Activated CD4-positive, alpha-beta T cell treated with anti-CD3 and anti-CD28 coated beads for 36 hours (primary cell): ENCODE measurements at regions of chr7 and their contacts with region 1.

Region 1: DNA sequence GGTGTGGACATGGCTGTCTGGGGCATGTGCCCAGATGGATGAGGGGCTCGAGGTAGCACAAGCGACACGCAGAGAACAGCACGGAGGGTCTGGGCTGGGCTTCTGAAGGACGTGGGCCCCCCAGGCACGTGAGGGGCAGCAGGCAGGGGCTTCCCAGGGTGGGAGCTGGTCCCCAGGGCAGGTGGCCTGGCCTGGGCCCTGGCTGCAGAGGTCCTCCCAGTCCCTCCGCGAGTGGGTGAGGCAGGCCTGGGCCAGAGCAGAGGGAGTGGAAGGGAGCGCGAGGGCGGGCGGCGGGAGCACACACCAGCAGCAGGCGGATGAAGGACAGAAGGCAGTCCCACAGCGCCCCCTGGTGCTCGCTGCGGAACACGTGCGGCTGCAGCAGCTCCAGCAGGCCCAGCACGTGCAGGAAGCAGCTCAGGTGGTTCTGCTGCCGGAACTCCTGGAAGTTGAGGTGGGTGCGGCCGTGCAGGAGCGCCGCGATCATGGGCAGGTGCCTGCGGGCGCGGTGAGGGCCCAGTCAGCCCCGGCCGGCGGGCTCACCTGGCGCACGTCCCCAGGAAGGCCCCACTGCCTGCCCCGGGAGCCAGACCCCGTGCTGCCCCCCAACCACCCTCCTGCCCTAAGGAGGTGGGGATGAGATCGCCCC is 14.7 kb upstream of the MICALL2 start:
- DNase-seq: peak; percentile 94
- ATAC-seq: peak; percentile 93
- H3K4me3 Mint-ChIP-seq: no peak overlapping the region
- H3K27ac Mint-ChIP-seq: no peak overlapping the region
- H3K4me1 Mint-ChIP-seq: peaks cover 5% of the 10 kb centered on the region
- H3K27me3 Mint-ChIP-seq: no peaks in the 10 kb centered on the region

Region 2: GRCh38 chr7:1004018-1004852 is 469.8 kb before region 1 on chr7:
- CTCF ChIA-PET with region 1: no interaction called
- POLR2A ChIA-PET with region 1: no interaction called
- intact Hi-C with region 1: no loop called
- DNase-seq: no peak
- ATAC-seq: no peak
- H3K4me3 Mint-ChIP-seq: no peak overlapping the region
- H3K27ac Mint-ChIP-seq: no peak overlapping the region
- H3K4me1 Mint-ChIP-seq: no peaks in the 10 kb centered on the region
- H3K27me3 Mint-ChIP-seq: no peaks in the 10 kb centered on the region

Region 3: GRCh38 chr7:1240517-1241257 is 233.3 kb before region 1 on chr7:
- CTCF ChIA-PET with region 1: no interaction called
- POLR2A ChIA-PET with region 1: no interaction called
- intact Hi-C with region 1: loop called in 1 of 2 experiments (anchors 5 kb)
- DNase-seq: no peak
- ATAC-seq: no peak
- H3K4me3 Mint-ChIP-seq: no peak overlapping the region
- H3K27ac Mint-ChIP-seq: no peak overlapping the region
- H3K4me1 Mint-ChIP-seq: peaks cover 5% of the 10 kb centered on the region
- H3K27me3 Mint-ChIP-seq: peaks cover 55% of the 10 kb centered on the region

Region 4: DNA sequence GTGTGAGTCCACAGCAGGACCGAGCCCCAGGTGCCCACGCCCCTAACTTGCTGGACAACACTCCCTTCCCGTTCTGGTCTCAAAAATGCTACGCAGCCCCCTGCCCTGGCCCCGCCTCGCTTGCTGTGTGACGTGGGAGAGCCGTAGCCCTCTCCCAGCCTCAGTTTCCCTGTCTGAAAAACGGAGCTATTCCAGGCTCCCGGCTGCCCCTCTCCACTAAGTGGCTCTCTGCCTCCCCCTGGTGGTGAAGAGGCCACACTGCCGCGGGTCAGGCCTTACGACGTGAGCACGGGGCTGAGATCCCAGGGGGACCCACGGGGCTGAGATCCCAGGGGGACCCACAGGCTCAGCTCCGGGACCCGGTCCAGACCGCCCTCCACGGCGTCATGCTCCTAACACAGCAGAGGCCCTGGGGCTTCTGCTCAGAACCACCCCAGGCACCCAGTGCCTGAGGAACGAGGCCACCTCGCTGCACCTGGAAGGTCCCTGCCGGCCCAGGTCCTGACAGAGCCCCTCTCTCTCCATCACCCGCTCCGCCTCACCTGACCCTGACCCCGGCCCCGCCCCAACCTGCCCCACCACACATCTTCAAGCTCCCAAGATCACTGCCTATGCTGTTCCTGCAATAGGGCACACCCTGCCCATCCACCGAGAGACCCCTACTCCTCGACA is 41.4 kb before region 1 on chr7:
- CTCF ChIA-PET with region 1: no interaction called
- POLR2A ChIA-PET with region 1: no interaction called
- intact Hi-C with region 1: loop called in 1 of 2 experiments (anchors 1 kb)
- DNase-seq: peak; percentile 89
- ATAC-seq: peak; percentile 88
- H3K4me3 Mint-ChIP-seq: no peak overlapping the region
- H3K27ac Mint-ChIP-seq: no peak overlapping the region
- H3K4me1 Mint-ChIP-seq: peaks cover 3% of the 10 kb centered on the region
- H3K27me3 Mint-ChIP-seq: peaks cover 2% of the 10 kb centered on the region